Heart right ventricle (tissue), 16 donors: ENCODE measurements at regions of chr1 and their contacts with region 1.

Region 1: DNA sequence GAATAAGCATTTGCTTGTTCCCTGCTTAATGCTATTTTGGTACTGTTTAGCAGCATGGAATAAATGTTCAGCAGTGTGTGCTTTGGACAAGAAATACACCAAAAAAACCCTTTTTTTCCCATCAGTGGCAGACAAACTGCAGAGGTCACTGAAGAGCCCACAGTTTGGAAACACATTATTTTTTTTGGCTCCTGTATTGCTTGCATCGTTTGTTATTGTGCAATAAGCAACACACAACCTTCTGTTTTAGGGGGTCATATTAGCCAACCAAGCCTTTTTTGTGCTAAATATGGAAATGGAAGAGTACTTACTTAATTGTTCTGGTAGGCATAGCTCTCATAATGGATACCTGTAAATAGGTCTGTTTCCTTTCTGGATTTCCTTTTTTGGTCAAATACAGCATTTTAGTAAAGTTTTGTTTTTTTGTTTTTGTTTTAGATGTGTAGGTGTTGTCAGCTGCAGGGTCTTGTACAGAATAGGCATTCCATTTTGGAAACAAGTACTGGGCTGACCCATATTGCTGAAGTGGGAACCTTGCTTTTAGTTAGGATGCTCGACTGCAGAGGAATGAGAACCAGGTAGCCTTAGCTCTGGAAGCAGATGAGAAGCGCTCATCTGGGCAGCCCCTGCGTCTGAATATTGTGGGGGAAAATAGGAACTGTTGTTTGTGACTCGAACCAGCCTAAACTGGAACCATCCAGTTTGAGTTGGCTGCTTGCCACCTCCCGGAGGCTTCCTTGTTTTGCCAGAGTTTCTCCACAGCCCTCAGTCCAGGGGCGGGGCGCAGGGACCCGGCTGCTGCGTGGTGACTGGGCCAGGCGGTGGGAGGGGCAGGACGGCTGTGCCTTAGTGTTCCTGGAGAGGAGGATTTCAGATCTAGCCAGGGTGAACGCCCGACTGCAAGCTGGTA is 38.4 kb downstream of the SPEN start:
- DNase-seq: peak; percentile 96 to 97
- ATAC-seq: peak; percentile 98 to 99 (median 98)
- H3K4me3 ChIP-seq: peak overlapping the region in 9 of 10 donors; percentile 8 to 54 (median 42)
- H3K27ac ChIP-seq: peak overlapping the region; percentile 65 to 94 (median 82)
- H3K4me1 ChIP-seq: peaks cover 4 to 82% (median 55%) of the 10 kb centered on the region in 9 donors
- H3K27me3 ChIP-seq: no peaks in the 10 kb centered on the region
- CTCF ChIP-seq: peak in 6 of 9 donors; percentile 6 to 47 (median 28)

Region 2: DNA sequence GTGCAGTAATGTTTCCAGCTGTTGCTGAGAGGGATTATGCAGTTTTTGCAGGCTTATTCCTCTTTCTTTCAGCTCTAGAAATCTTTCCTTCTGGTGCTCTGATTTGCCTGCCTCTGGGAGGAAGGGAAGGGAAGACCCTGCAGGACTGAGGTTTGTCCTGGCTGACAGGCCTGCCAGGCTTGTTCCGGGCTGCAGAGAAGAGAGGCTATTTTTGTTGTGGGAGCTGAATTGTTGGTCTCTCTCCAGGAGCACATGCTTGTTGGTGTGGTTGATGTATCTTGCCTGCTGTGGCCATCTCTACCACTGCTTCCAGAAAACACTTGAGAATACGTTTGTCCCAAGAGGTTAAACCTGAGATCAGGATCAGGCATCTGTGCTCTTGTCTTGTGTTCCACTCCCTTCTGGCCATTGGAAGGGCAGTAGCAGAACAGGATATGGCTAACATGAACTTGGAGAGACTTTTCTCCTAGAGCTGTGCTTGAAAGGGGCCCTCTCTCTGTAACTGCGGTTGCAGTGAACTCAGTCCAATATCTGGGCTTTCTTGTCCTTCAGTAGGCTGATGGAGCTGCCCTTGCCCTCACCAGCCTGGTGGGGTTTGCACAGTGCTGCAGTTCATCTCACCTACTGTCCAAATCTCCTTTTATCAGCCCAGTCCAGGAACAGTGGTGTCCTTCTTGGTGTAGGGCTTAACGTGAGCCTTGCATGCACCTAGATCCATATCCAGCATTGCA is 171.4 kb before region 1 on chr1:
- intact Hi-C with region 1: no loop called
- DNase-seq: peak in 1 of 2 donors; percentile 68
- ATAC-seq: peak; percentile 73 to 89 (median 82)
- H3K4me3 ChIP-seq: no peak overlapping the region
- H3K27ac ChIP-seq: peak overlapping the region; percentile 53 to 88 (median 75)
- H3K4me1 ChIP-seq: peaks cover 20 to 88% (median 64%) of the 10 kb centered on the region in 9 donors
- H3K27me3 ChIP-seq: no peaks in the 10 kb centered on the region
- CTCF ChIP-seq: no peak

Region 3: DNA sequence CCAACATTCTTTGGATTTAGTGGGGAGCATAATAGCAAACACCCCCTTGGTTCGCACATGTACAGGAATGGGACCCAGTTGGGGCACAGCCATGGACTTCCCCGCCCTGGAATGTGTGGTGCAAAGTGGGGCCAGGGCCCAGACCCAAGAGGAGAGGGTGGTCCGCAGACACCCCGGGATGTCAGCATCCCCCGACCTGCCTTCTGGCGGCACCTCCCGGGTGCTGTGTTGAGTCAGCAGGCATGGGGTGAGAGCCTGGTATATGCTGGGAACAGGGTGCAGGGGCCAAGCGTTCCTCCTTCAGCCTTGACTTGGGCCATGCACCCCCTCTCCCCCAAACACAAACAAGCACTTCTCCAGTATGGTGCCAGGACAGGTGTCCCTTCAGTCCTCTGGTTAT is 100.3 kb before region 1 on chr1:
- intact Hi-C with region 1: no loop called
- DNase-seq: no peak
- ATAC-seq: peak in 2 of 8 donors; percentile 31 to 43
- H3K4me3 ChIP-seq: no peak overlapping the region
- H3K27ac ChIP-seq: no peak overlapping the region
- H3K4me1 ChIP-seq: peaks cover 0 to 14% (median 6%) of the 10 kb centered on the region in 9 donors
- H3K27me3 ChIP-seq: no peaks in the 10 kb centered on the region
- CTCF ChIP-seq: no peak

Region 4: GRCh38 chr1:15835741-15836510 is 50.0 kb before region 1 on chr1:
- intact Hi-C with region 1: loop called in 4 of 10 experiments (anchors 5 to 10 kb)
- DNase-seq: peak; percentile 100
- ATAC-seq: peak; percentile 85 to 95 (median 92)
- H3K4me3 ChIP-seq: peak overlapping the region; percentile 67 to 91 (median 87)
- H3K27ac ChIP-seq: peak overlapping the region; percentile 97 to 100 (median 100)
- H3K4me1 ChIP-seq: peaks cover 3 to 45% (median 21%) of the 10 kb centered on the region in 9 donors
- H3K27me3 ChIP-seq: no peaks in the 10 kb centered on the region
- CTCF ChIP-seq: no peak

Region 5: GRCh38 chr1:15911141-15911540 is 25.2 kb after region 1 on chr1:
- intact Hi-C with region 1: no loop called
- DNase-seq: no peak
- ATAC-seq: no peak
- H3K4me3 ChIP-seq: no peak overlapping the region
- H3K27ac ChIP-seq: no peak overlapping the region
- H3K4me1 ChIP-seq: peaks cover 0 to 11% (median under 1%) of the 10 kb centered on the region in 9 donors
- H3K27me3 ChIP-seq: no peaks in the 10 kb centered on the region
- CTCF ChIP-seq: no peak

Region 6: DNA sequence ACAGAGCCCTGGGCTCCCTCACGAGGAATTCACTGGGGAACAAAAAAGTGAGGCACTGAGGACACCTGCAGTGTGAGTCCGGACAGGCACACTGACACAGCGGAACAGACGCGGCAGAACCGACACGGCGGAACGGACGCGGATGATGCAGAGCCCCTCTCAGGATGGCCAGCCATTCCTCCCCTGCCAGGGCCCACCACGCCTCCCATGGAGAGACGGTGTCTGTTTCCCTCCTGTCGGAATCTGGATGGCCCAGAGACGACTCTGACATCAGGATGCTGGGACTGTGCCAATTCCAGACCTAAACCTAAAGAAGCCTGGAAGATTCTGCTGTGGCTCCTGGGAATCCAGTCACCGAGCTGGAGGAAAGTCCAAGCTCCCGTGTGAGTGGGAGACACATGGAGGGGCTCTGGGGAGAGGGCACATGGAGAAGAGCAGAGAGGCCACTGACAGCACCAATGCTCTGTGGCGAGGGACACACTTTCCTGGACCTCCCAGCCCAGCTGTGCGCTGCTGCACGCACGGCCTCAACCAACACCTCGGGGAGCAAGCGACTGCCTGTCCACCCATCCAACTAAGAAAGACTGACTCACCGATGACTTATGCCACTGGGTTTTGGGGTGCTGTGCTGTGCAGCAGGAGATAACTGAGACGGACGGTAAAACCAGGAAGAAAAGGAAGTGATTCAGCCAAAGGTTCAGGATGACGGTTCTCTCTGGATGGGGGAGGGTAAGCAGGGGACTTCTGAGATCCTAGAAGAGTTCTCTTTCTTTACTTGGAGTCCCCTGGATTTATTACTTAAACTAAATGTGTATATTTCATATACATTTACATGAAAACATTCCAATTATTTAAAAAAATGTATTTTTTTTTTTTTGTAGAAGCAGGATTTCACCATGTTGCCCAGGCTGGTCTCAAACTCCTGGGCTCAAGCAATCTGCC is 66.6 kb after region 1 on chr1:
- intact Hi-C with region 1: no loop called
- DNase-seq: no peak
- ATAC-seq: no peak
- H3K4me3 ChIP-seq: no peak overlapping the region
- H3K27ac ChIP-seq: peak overlapping the region in 3 of 10 donors; percentile 7 to 94 (median 38)
- H3K4me1 ChIP-seq: peaks cover 43 to 92% (median 81%) of the 10 kb centered on the region in 9 donors
- H3K27me3 ChIP-seq: no peaks in the 10 kb centered on the region
- CTCF ChIP-seq: no peak